GM10248 (cell line): ENCODE measurements at regions of chr3 and their contacts with region 1.

Region 1: GRCh38 chr3:39000008-39000450 is 51.7 kb downstream of the SCN11A start:
- DNase-seq: peak; percentile 71
- CTCF ChIP-seq: peak; percentile 82

Region 2: DNA sequence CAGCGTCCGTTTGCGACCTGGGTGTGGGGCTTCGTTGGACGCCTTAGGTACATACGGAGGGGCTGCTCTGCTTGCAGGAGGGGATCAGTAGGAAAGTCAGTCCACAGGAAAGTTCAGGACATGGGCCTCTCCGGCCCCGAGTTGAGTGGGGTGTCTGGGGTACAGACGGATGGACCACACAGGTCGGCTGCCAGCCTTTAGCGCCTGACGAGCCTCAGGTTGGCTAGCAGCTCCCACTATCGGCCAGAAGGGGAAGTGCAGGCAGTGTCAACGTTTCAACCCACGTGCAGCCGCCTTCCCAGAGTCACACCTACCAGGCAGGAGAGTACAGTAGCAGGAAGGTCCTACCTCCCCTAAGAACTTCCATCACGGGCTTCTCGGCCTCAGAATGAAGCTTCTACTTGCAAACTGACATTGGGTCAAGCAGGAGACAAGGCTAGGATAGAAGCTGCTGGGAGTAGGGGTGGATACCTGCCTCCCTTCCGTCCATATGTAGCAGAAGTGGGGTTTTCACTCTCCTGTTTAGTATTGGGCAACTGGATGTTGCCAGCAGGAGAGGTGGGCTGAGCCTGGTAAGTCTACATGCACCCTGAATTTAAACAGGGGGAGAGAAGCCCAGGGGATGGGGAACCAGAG is 348.8 kb before region 1 on chr3:
- CTCF ChIA-PET with region 1: interaction called, 13 read pairs
- POLR2A ChIA-PET with region 1: no interaction called
- DNase-seq: peak; percentile 84
- CTCF ChIP-seq: peak; percentile 99

Region 3: GRCh38 chr3:38978729-38979128 is 21.3 kb before region 1 on chr3:
- CTCF ChIA-PET with region 1: interaction called, 10 read pairs
- POLR2A ChIA-PET with region 1: no interaction called
- DNase-seq: no peak
- CTCF ChIP-seq: no peak

Region 4: DNA sequence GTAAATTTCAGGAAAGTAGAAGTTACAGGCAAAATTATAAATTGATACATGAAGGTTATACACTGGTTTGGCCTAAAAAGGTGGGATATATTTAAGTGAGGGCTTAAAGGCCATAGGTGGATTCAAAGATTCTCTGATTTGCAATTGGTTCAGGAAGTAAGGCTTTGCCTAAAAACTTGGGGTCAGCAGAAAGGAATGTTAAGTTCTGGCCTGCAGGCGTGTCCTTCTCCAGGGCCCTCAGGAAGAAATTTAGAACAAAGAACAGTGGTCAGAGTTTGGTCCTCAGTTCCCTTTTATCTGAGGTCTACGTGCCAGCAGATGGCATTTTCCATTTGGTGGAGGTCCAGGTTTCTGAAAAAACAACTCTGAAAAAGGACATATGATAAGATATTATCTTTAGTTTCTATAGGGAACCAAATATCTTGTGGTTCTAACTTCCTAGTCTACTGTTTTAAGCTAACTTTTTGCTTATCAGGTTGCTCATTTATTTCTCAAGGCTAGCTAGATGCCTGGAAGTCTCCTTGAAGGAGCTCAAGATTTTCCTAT is 11.2 kb after region 1 on chr3:
- CTCF ChIA-PET with region 1: interaction called, 34 read pairs
- POLR2A ChIA-PET with region 1: no interaction called
- DNase-seq: no peak
- CTCF ChIP-seq: no peak

Region 5: DNA sequence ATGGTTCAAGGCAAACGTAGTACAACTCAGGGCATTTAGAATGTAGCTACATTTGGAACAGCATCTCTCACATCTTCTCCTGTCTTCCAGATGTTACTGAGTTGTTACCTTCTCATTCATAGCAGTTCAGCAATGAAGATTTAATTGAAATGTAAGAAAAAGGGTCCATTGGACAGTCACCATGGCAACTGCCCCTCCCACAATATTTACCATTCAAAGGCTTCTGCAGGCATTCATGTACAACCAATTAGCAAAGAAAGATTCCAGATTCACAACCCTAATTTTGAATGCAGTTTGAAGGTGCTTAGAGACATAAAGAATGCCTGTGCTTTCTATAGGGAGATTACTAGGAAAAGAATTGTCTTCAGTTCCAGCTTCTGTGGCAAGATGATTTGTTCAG is 29.5 kb after region 1 on chr3:
- CTCF ChIA-PET with region 1: interaction called, 17 read pairs
- POLR2A ChIA-PET with region 1: no interaction called
- DNase-seq: no peak
- CTCF ChIP-seq: no peak